ENCODE measurements at regions of chr5 and their contacts with region 1.

Region 1: GRCh38 chr5:104178829-104179456 is 616.4 kb upstream of the NUDT12 start:
- DNase-seq: no peak
- H3K4me3 ChIP-seq: no peak overlapping the region
- H3K27ac ChIP-seq: no peak overlapping the region
- H3K27me3 ChIP-seq: no peaks in the 10 kb centered on the region
- CTCF ChIP-seq: peak; percentile 63

Region 2: DNA sequence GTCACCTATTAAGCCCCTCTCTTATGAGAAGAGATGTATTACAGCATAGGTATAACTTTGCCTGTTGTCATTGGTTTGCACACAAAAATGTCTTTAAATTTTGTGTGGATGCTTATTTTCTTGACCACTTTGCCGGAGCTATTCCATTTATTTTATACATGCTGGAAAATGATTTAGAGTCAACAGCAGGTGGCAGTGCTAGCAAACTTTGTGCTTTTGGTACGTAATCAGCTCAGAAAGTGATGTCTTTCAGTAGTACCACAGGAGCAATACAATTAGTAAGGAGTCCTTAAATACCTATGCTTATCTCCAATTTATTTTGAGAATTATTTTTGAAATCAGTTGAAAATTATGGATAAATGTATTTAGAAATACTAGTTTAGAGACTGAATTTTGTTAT is 596.6 kb before region 1 on chr5:
- CTCF ChIA-PET with region 1: interaction called, 221 read pairs
- POLR2A ChIA-PET with region 1: no interaction called
- DNase-seq: peak; percentile 6
- H3K4me3 ChIP-seq: no peak overlapping the region
- H3K27ac ChIP-seq: no peak overlapping the region
- H3K27me3 ChIP-seq: no peaks in the 10 kb centered on the region
- CTCF ChIP-seq: peak; percentile 58

Region 3: GRCh38 chr5:103589357-103589756 is 589.6 kb before region 1 on chr5:
- CTCF ChIA-PET with region 1: interaction called, 221 read pairs
- POLR2A ChIA-PET with region 1: no interaction called
- DNase-seq: no peak
- H3K4me3 ChIP-seq: no peak overlapping the region
- H3K27ac ChIP-seq: no peak overlapping the region
- H3K27me3 ChIP-seq: no peaks in the 10 kb centered on the region
- CTCF ChIP-seq: no peak

Region 4: GRCh38 chr5:103598997-103599566 is 579.9 kb before region 1 on chr5:
- CTCF ChIA-PET with region 1: interaction called, 12 read pairs
- POLR2A ChIA-PET with region 1: no interaction called
- DNase-seq: no peak
- H3K4me3 ChIP-seq: no peak overlapping the region
- H3K27ac ChIP-seq: no peak overlapping the region
- H3K27me3 ChIP-seq: no peaks in the 10 kb centered on the region
- CTCF ChIP-seq: no peak

Region 5: DNA sequence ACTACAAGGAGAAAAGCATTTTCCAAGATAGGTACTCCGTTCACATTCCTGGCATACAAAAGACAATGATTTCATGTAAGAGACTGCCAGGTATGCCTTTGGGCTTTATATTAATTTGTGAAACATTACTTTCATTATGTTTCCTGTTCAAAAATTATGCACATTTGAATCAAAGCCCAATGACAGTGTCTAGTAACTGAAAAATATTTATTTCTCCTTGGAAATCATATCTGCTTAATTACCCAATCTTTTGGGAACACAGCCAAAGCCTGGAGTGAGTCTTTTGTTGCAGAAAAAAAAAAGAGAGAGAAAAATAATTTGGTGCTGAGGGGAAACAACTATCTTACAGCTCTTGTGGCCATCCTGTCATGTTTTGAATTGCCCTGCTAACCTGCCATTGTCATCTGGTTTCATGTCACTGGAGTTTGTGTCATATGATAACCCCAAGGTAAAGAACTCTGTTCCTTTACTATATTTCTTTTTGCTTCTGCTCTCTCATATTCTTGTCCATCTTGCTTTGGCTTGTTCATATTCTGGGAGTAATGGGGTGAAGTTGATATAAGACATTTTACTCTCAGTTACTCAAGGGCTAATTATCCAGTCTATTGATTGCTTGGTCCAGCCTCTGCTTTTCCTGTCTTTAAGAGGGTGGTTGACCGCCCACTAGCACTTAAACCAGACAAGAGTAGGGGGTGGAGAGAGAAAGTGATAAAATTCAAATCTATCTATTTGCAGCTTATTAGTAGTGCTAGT is 378.0 kb before region 1 on chr5:
- CTCF ChIA-PET with region 1: interaction called, 18 read pairs
- POLR2A ChIA-PET with region 1: no interaction called
- DNase-seq: no peak
- H3K4me3 ChIP-seq: no peak overlapping the region
- H3K27ac ChIP-seq: no peak overlapping the region
- H3K27me3 ChIP-seq: no peaks in the 10 kb centered on the region
- CTCF ChIP-seq: no peak

Region 6: GRCh38 chr5:103808464-103809106 is 370.4 kb before region 1 on chr5:
- CTCF ChIA-PET with region 1: interaction called, 135 read pairs
- POLR2A ChIA-PET with region 1: no interaction called
- DNase-seq: peak; percentile 27
- H3K4me3 ChIP-seq: no peak overlapping the region
- H3K27ac ChIP-seq: no peak overlapping the region
- H3K27me3 ChIP-seq: no peaks in the 10 kb centered on the region
- CTCF ChIP-seq: peak; percentile 100

Region 7: DNA sequence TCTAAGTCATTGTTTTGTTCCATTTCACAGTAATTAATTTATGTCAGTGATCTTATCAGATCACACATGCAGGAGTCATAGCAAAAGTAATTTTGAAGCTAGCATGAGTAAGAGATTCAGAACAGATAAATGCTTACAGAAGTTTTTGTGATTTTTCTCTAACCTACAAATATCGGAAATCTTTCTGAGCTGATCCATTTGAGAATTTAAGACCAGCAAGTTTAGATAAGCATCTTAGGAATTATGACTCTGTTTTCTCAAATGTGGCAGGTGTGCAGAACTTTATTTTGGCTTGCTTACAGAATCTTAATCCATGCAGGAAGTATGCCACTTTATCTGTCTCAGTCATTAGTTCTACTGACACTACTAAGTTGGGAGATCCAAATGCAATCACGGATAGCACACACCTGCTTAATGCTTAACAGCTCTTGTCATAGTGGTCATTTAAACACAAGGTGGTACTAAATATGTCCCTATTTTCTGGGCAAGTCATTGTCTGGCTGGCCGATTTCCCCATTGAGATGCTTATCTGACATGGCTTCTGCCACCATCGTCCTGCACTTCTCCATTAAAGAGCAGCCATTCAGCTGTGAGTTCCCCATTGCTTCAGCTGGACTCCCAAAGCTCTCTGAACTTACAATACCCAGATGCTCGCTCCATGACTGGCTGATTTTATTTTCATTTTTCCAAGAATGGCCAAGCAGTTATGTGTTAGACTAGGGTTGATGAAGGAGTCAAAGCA is 310.9 kb before region 1 on chr5:
- CTCF ChIA-PET with region 1: no interaction called
- POLR2A ChIA-PET with region 1: no interaction called
- DNase-seq: no peak
- H3K4me3 ChIP-seq: no peak overlapping the region
- H3K27ac ChIP-seq: no peak overlapping the region
- H3K27me3 ChIP-seq: no peaks in the 10 kb centered on the region
- CTCF ChIP-seq: no peak

Region 8: DNA sequence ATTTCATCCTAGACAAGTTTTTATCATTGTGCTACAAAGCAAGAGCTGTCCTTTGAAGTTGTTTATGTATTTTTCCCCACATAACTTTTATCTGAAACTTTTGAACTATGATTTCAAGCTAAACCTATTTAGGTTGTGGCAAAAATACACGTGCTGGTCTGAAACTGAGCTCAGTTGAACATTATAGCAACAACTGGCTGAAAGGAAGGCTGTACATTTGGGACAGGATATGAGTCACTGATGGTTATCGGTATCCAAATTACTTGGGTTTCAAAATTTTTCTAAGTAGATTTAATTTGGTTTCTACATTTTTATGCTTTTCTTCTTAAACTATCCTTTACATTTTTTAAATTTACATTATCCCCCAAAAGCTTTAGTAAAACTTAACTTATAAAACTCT is 11.0 kb after region 1 on chr5:
- CTCF ChIA-PET with region 1: interaction called, 17 read pairs
- POLR2A ChIA-PET with region 1: no interaction called
- DNase-seq: peak; percentile 27
- H3K4me3 ChIP-seq: no peak overlapping the region
- H3K27ac ChIP-seq: no peak overlapping the region
- H3K27me3 ChIP-seq: no peaks in the 10 kb centered on the region
- CTCF ChIP-seq: no peak

Measured in AG04450 (cell line).